IMR-90 (cell line): ENCODE measurements at regions of chr14 and their contacts with region 1.

Region 1: GRCh38 chr14:58297762-58298476 is 436 bp upstream of the ARID4A start:
- DNase-seq: peak; percentile 100
- ATAC-seq: peak; percentile 94
- H3K4me3 ChIP-seq: peak overlapping the region; percentile 73
- H3K27ac ChIP-seq: peak overlapping the region; percentile 98
- H3K4me1 ChIP-seq: no peaks in the 10 kb centered on the region
- H3K27me3 ChIP-seq: no peaks in the 10 kb centered on the region
- CTCF ChIP-seq: no peak
- POLR2A ChIP-seq: peak; percentile 91
- RAD21 ChIP-seq: no peak

Region 2: GRCh38 chr14:58244556-58245387 is 53.1 kb before region 1 on chr14 and contains the start of gene PSMA3:
- CTCF ChIA-PET with region 1: no interaction called
- POLR2A ChIA-PET with region 1: interaction called, 3 read pairs
- dilution Hi-C with region 1: no loop called
- in situ Hi-C with region 1: no loop called
- intact Hi-C with region 1: loop called (anchors 1 kb)
- DNase-seq: peak; percentile 95
- ATAC-seq: peak; percentile 95
- H3K4me3 ChIP-seq: peak within 1 kb of the TSS; percentile 80
- H3K27ac ChIP-seq: peak within 1 kb of the TSS; percentile 93
- H3K4me1 ChIP-seq: no peaks in the 10 kb centered on the region
- H3K27me3 ChIP-seq: no peaks in the 10 kb centered on the region
- CTCF ChIP-seq: no peak
- POLR2A ChIP-seq: peak; percentile 95
- RAD21 ChIP-seq: no peak
- total RNA-seq, gene PSMA3: 74.9 and 114 TPM in 2 replicates

Region 3: GRCh38 chr14:58356268-58356667 is 58.3 kb after region 1 on chr14:
- CTCF ChIA-PET with region 1: no interaction called
- POLR2A ChIA-PET with region 1: no interaction called
- dilution Hi-C with region 1: no loop called
- in situ Hi-C with region 1: no loop called
- intact Hi-C with region 1: loop called (anchors 5 kb)
- DNase-seq: peak; percentile 61
- ATAC-seq: peak; percentile 90
- H3K4me3 ChIP-seq: no peak overlapping the region
- H3K27ac ChIP-seq: peak overlapping the region; percentile 69; the same call in 1 of the 2 replicates
- H3K4me1 ChIP-seq: peaks cover 3% of the 10 kb centered on the region; the same call in 1 of the 2 replicates
- H3K27me3 ChIP-seq: no peaks in the 10 kb centered on the region
- CTCF ChIP-seq: no peak
- POLR2A ChIP-seq: no peak
- RAD21 ChIP-seq: no peak

Region 4: DNA sequence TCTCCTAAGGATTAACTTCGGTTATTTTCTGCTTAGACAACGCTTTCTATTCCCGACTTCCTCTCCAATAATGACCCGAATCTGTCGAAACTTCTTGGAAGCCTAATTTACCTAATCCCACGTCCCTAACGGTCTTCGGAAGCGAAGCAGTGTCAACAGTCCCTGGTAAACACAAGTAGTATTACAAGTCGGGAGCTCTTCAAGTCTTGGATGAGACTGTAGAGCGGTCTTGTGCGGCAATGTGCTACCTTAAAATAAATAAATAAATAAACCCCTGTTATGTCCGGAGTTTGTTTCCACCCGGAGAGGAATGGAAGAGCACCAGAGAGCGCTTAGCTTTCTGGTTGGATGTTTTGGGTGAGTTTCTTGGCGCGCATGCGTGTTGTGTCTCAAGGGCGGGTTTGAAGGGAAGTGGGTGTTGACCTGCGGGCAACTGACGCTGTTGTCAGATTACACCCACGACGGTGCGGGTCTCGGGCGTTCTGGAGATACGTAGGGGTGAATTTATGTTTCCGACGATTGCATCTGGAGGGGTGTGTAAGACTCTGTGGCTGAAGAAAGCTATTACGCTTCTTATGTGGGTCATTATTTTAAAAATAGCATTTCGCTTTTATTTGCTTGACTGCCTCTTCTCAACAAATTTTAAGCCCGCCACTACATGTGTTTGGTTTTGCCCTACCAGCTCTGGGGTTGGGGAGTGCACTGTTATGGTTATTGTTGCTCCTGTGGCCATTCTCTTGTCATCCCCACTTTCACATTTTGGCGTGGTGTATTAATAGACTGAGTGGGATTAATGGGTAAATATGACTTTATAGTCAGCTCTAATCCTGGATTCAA is 129.6 kb after region 1 on chr14 and contains the starts of genes KIAA0586 and TIMM9:
- CTCF ChIA-PET with region 1: no interaction called
- POLR2A ChIA-PET with region 1: no interaction called
- dilution Hi-C with region 1: no loop called
- in situ Hi-C with region 1: no loop called
- intact Hi-C with region 1: loop called (anchors 2 kb)
- DNase-seq: peak; percentile 99
- ATAC-seq: peak; percentile 95
- H3K4me3 ChIP-seq: peak within 1 kb of the TSS; percentile 92
- H3K27ac ChIP-seq: peak within 1 kb of the TSS; percentile 93
- H3K4me1 ChIP-seq: no peaks in the 10 kb centered on the region
- H3K27me3 ChIP-seq: no peaks in the 10 kb centered on the region
- CTCF ChIP-seq: no peak
- POLR2A ChIP-seq: peak; percentile 72; the same call in 1 of the 2 replicates
- RAD21 ChIP-seq: no peak
- total RNA-seq, gene KIAA0586: 36.7 and 44.4 TPM in 2 replicates
- total RNA-seq, gene TIMM9: 27.8 and 49.7 TPM in 2 replicates

Region 5: GRCh38 chr14:58587271-58587670 is 289.4 kb after region 1 on chr14:
- CTCF ChIA-PET with region 1: no interaction called
- POLR2A ChIA-PET with region 1: no interaction called
- dilution Hi-C with region 1: no loop called
- in situ Hi-C with region 1: no loop called
- intact Hi-C with region 1: no loop called
- DNase-seq: peak; percentile 87
- ATAC-seq: peak; percentile 64
- H3K4me3 ChIP-seq: no peak overlapping the region
- H3K27ac ChIP-seq: no peak overlapping the region; the same call in 1 of the 2 replicates
- H3K4me1 ChIP-seq: peaks cover 15% of the 10 kb centered on the region
- H3K27me3 ChIP-seq: no peaks in the 10 kb centered on the region
- CTCF ChIP-seq: no peak
- POLR2A ChIP-seq: no peak
- RAD21 ChIP-seq: no peak